ENCODE measurements at regions of chr14 and their contacts with region 1.

Region 1: GRCh38 chr14:105760691-105761346 is 234.4 kb downstream of the TMEM121 start:
- DNase-seq: no peak
- H3K4me3 ChIP-seq: no peak overlapping the region
- H3K27ac ChIP-seq: no peak overlapping the region
- H3K4me1 ChIP-seq: no peaks in the 10 kb centered on the region
- H3K27me3 ChIP-seq: peaks cover 6% of the 10 kb centered on the region
- CTCF ChIP-seq: no peak

Region 2: DNA sequence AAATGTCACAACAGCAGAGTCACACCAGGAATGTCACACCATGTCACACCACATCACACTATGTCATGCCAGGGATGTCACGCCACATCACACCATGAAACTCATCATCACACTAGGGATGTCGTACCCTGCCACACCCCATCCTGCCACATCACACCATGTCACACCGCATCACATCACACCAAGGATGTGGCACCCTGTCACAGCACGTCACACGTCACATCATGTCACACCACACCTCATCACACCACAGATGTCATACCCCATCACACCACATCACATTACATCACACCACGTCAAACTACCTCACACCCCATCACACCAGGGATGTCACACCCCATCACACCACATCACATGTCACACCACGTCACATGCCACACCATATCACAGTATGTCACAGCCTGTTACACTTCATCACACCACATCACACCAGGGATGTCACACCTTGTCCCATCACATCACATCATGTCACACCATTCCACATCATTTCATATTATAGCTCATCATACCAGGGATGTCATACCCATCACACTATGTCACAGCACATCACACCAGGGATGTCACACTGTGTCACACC is 143.5 kb before region 1 on chr14:
- intact Hi-C with region 1: loop called (anchors 5 kb)
- DNase-seq: no peak
- H3K4me3 ChIP-seq: no peak overlapping the region
- H3K27ac ChIP-seq: no peak overlapping the region
- H3K4me1 ChIP-seq: no peaks in the 10 kb centered on the region
- H3K27me3 ChIP-seq: peaks cover 7% of the 10 kb centered on the region
- CTCF ChIP-seq: no peak